B cell (primary cell): ENCODE measurements at regions of chr15 and their contacts with region 1.

Region 1: DNA sequence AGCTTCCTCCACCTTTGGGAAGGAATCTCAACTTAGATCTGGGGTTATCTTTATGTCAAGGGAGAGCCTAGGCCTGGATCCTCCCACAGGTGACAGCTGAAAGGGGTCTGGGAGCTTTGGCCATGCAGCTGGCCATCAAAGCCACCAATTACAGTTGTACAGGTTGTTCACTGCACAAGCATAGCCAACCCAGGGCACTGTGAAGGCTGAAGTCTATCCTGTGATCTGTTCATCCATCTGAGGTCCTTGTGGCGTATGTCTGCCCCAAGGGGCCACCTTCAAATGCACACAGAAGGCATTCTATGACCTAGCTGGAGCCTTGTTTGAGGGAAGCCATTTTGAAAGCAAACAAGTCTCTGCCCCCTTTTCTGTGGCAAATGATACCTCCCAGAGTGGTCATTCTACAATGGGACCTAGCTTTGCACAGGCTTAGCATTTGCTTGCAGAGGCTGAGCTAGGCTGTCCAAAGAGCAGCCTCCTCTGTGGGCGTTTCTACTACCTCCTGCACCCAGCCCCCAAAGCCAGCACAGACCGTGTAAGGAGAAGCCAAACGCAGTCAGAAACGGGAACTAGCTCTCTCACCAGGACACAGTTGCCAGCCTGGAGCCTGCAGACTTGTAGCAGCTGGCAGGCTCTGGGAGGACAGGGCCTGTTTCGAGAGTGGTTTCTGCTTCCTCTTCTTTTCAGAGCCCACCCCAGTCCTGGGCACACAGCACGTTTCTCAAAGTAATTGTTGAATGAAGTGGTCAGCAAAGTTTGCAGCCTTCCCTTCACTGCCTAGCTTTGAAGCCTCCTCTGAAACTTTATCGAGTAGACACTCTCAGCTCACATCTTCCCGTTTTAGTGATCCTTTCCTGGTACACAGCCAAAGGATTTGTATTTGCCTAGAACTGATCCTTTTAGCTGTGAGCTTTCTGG is 157.3 kb upstream of the SMAD3 start:
- DNase-seq: peak; percentile 71
- ATAC-seq: peak; percentile 67
- H3K4me3 ChIP-seq: peak overlapping the region in 1 of 5 experiments; percentile 3
- H3K4me3 Mint-ChIP-seq: no peak overlapping the region
- H3K27ac ChIP-seq: peak overlapping the region in 1 of 2 donors; percentile 32
- H3K27ac Mint-ChIP-seq: peak overlapping the region; percentile 73
- H3K4me1 ChIP-seq: peaks cover 22 to 23% of the 10 kb centered on the region in 2 donors
- H3K4me1 Mint-ChIP-seq: peaks cover 38% of the 10 kb centered on the region
- H3K27me3 ChIP-seq: no peaks in the 10 kb centered on the region
- H3K27me3 Mint-ChIP-seq: peaks cover 12% of the 10 kb centered on the region
- CTCF ChIP-seq: no peak

Region 2: DNA sequence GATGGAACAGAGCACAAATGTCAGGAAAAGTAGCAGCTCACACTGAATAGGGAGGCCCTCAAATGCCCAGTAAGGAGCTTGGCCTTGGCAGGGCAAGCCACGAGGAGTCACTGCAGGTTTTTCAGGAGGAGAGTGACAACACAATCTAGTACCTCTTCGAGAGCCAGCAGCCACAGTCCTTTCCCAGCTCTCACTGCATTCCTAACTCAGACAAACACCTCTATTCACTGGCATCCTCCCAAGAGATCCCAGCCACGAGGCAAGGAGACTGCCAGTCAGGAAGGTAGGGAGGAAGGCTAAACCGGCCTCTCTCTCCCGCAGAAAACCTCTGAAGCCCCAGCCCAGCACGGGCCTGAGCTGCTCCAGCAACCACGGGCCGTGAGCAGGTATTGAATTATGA is 11.3 kb after region 1 on chr15:
- CTCF ChIA-PET with region 1: interaction called, 14 read pairs
- POLR2A ChIA-PET with region 1: no interaction called
- intact Hi-C with region 1: no loop called
- DNase-seq: no peak
- ATAC-seq: no peak
- H3K4me3 ChIP-seq: no peak overlapping the region
- H3K4me3 Mint-ChIP-seq: no peak overlapping the region
- H3K27ac ChIP-seq: no peak overlapping the region
- H3K27ac Mint-ChIP-seq: no peak overlapping the region
- H3K4me1 ChIP-seq: peaks cover 6 to 10% of the 10 kb centered on the region in 2 donors
- H3K4me1 Mint-ChIP-seq: peaks cover 7% of the 10 kb centered on the region
- H3K27me3 ChIP-seq: peaks cover 0 to 14% (median 0%) of the 10 kb centered on the region in 4 experiments
- H3K27me3 Mint-ChIP-seq: peaks cover 36% of the 10 kb centered on the region
- CTCF ChIP-seq: no peak